ENCODE measurements at regions of chr6 and their contacts with region 1.

Region 1: GRCh38 chr6:137707590-137708360 is 159.3 kb upstream of the TNFAIP3 start:
- DNase-seq: peak; percentile 60 to 98 (median 82)
- ATAC-seq: peak; percentile 71
- H3K4me3 ChIP-seq: no peak overlapping the region
- H3K4me3 Mint-ChIP-seq: peak overlapping the region; percentile 3
- H3K27ac ChIP-seq: peak overlapping the region; percentile 46 to 82
- H3K27ac Mint-ChIP-seq: peak overlapping the region; percentile 88
- H3K4me1 ChIP-seq: peaks cover 37% of the 10 kb centered on the region
- H3K4me1 Mint-ChIP-seq: peaks cover 54% of the 10 kb centered on the region
- H3K27me3 ChIP-seq: no peaks in the 10 kb centered on the region
- H3K27me3 Mint-ChIP-seq: no peaks in the 10 kb centered on the region
- CTCF ChIP-seq: peak; percentile 81

Region 2: GRCh38 chr6:137423444-137424168 is 284.2 kb before region 1 on chr6:
- CTCF ChIA-PET with region 1: no interaction called
- POLR2A ChIA-PET with region 1: no interaction called
- intact Hi-C with region 1: no loop called
- DNase-seq: no peak
- ATAC-seq: no peak
- H3K4me3 ChIP-seq: no peak overlapping the region
- H3K4me3 Mint-ChIP-seq: no peak overlapping the region
- H3K27ac ChIP-seq: no peak overlapping the region
- H3K27ac Mint-ChIP-seq: no peak overlapping the region
- H3K4me1 ChIP-seq: peaks cover 12% of the 10 kb centered on the region
- H3K4me1 Mint-ChIP-seq: peaks cover 23% of the 10 kb centered on the region
- H3K27me3 ChIP-seq: no peaks in the 10 kb centered on the region
- H3K27me3 Mint-ChIP-seq: no peaks in the 10 kb centered on the region
- CTCF ChIP-seq: no peak

Region 3: DNA sequence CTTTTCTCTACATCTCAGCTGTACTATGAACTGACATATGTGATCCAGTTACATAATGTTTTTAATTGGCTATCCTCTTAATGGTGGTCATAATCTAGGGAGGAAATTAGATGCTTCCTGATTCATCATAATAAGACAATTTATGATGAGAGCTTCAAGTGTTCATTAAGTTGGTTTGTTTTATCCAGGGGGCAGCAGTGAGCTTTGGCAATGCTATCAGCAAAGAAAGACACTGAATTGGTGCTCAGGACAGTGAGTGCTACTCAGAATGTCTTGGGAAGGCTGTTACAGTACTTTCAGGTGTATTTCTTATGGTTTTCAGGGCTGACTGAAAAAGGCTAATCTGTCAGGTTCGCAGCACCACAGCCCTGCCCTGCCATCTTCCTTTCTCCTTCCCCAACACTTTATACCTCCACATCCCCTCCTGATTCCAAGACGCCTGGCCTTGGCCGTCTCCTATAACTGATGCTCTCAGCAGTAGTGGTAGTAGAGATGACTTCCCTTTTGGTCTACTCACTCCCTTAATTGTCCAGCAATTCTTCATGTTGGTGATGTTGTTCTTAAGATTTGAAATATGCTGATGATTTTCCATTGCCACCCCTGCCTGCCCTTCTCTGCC is 92.3 kb after region 1 on chr6:
- CTCF ChIA-PET with region 1: interaction called, 33 read pairs
- POLR2A ChIA-PET with region 1: interaction called, 13 read pairs
- intact Hi-C with region 1: loop called (anchors 1 kb)
- DNase-seq: peak; percentile 40 to 93 (median 72)
- ATAC-seq: peak; percentile 83
- H3K4me3 ChIP-seq: no peak overlapping the region
- H3K4me3 Mint-ChIP-seq: no peak overlapping the region
- H3K27ac ChIP-seq: peak overlapping the region in 1 of 2 experiments; percentile 4
- H3K27ac Mint-ChIP-seq: peak overlapping the region; percentile 56
- H3K4me1 ChIP-seq: peaks cover 47% of the 10 kb centered on the region
- H3K4me1 Mint-ChIP-seq: peaks cover 53% of the 10 kb centered on the region
- H3K27me3 ChIP-seq: no peaks in the 10 kb centered on the region
- H3K27me3 Mint-ChIP-seq: no peaks in the 10 kb centered on the region
- CTCF ChIP-seq: peak; percentile 68

Region 4: DNA sequence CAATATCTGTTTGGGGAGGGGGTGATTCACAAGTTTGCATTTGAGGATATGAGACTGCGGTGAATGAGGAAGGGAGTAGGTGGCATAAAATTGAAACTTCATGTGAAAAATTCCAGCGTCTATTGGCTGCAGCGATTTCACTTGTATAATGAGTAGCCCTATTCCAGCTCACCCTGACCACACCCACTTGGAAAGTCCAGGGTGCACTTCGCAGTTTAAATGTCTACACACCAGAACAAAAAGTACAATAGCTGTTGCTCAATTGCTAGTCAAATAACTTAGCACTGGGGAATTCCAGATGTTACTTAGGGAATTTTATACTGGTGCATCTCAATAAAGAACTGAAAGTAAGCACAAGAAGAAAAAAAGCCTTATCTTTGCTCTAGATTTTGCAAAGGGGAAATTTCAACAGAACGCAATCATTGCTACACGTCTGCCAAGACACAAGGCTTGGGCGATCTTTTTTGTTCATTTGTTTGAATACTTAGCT is 165.5 kb after region 1 on chr6:
- CTCF ChIA-PET with region 1: interaction called, 28 read pairs
- POLR2A ChIA-PET with region 1: interaction called, 44 read pairs
- intact Hi-C with region 1: no loop called
- DNase-seq: peak in 5 of 9 experiments; percentile 39 to 90 (median 54)
- ATAC-seq: peak; percentile 7
- H3K4me3 ChIP-seq: no peak overlapping the region
- H3K4me3 Mint-ChIP-seq: peak overlapping the region; percentile 98
- H3K27ac ChIP-seq: peak overlapping the region in 1 of 2 experiments; percentile 24
- H3K27ac Mint-ChIP-seq: peak overlapping the region; percentile 29
- H3K4me1 ChIP-seq: peaks cover 53% of the 10 kb centered on the region
- H3K4me1 Mint-ChIP-seq: peaks cover 71% of the 10 kb centered on the region
- H3K27me3 ChIP-seq: no peaks in the 10 kb centered on the region
- H3K27me3 Mint-ChIP-seq: no peaks in the 10 kb centered on the region
- CTCF ChIP-seq: no peak

Region 5: GRCh38 chr6:137938770-137939379 is 231.1 kb after region 1 on chr6:
- CTCF ChIA-PET with region 1: interaction called, 21 read pairs
- POLR2A ChIA-PET with region 1: interaction called, 4 read pairs
- intact Hi-C with region 1: loop called in 1 of 2 experiments (anchors 1 kb)
- DNase-seq: no peak
- ATAC-seq: no peak
- H3K4me3 ChIP-seq: no peak overlapping the region
- H3K4me3 Mint-ChIP-seq: no peak overlapping the region
- H3K27ac ChIP-seq: no peak overlapping the region
- H3K27ac Mint-ChIP-seq: no peak overlapping the region
- H3K4me1 ChIP-seq: peaks cover 7% of the 10 kb centered on the region
- H3K4me1 Mint-ChIP-seq: peaks cover 9% of the 10 kb centered on the region
- H3K27me3 ChIP-seq: no peaks in the 10 kb centered on the region
- H3K27me3 Mint-ChIP-seq: no peaks in the 10 kb centered on the region
- CTCF ChIP-seq: no peak

Region 6: DNA sequence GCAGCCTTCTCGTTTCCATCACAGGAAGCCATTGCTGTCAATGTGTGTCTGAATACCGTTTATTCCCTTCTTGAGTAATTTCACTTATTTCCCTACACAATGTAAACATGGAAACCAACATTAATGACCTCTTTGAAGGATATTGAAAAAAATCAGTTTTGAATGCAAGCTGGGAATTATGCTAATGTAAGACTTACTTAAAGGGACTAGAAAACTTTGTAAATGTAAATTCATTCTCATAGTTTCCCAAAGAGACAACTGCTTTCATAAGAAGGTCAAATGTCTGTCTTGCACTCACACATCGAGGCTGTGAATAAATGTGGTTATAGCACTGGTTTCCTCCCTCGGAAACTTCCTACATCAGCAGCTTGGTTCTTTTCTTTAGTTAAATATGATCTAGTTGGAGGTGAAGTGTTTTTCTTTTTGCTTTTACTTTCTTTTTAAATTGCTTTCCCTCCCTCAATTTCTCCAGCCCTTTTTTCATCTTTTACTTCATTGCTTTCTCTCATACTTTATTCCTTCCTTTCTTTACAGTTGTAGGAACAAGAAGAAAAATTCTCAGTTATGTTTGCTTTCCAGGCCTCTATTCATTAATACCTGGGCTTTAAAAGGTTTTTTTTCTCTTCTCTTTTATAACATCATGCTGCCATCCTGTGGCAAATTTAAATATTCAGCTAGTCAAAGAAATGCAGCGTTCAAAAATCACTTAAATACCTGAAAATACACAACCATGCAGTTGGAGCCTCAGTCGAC is 267.6 kb after region 1 on chr6:
- CTCF ChIA-PET with region 1: interaction called, 20 read pairs
- POLR2A ChIA-PET with region 1: interaction called, 8 read pairs
- intact Hi-C with region 1: loop called (anchors 1 kb)
- DNase-seq: peak in 5 of 9 experiments; percentile 19 to 89 (median 38)
- ATAC-seq: peak; percentile 80
- H3K4me3 ChIP-seq: peak overlapping the region; percentile 18 to 21
- H3K4me3 Mint-ChIP-seq: peak overlapping the region; percentile 74
- H3K27ac ChIP-seq: peak overlapping the region; percentile 39 to 85
- H3K27ac Mint-ChIP-seq: peak overlapping the region; percentile 92
- H3K4me1 ChIP-seq: peaks cover 24% of the 10 kb centered on the region
- H3K4me1 Mint-ChIP-seq: peaks cover 40% of the 10 kb centered on the region
- H3K27me3 ChIP-seq: no peaks in the 10 kb centered on the region
- H3K27me3 Mint-ChIP-seq: no peaks in the 10 kb centered on the region
- CTCF ChIP-seq: peak; percentile 75

Region 7: DNA sequence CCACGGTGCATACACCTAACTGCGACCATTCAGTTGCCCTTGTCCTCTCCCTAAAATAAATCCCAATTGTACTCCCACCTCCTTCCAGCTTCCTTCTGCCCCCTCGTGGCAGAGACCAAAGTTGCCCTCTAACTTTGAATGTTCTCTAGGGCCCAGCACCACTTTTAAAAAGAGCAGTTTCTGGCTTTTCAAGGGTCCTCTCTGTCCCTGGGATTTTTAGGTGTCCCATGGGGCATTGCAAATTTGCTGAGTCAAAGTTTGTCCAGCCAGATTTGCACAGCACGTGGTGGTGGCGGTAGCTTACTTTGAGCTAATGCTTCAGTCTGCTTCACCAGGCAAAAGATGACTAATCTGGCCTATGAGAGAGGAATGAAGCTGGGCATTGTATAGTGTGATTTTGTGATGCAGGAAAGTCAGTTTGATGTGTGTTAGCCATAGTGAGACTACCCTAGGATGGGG is 299.3 kb after region 1 on chr6:
- CTCF ChIA-PET with region 1: interaction called, 30 read pairs
- POLR2A ChIA-PET with region 1: no interaction called
- intact Hi-C with region 1: loop called (anchors 1 to 2 kb)
- DNase-seq: peak in 5 of 9 experiments; percentile 20 to 51 (median 30)
- ATAC-seq: no peak
- H3K4me3 ChIP-seq: no peak overlapping the region
- H3K4me3 Mint-ChIP-seq: no peak overlapping the region
- H3K27ac ChIP-seq: no peak overlapping the region
- H3K27ac Mint-ChIP-seq: no peak overlapping the region
- H3K4me1 ChIP-seq: no peaks in the 10 kb centered on the region
- H3K4me1 Mint-ChIP-seq: peaks cover 4% of the 10 kb centered on the region
- H3K27me3 ChIP-seq: no peaks in the 10 kb centered on the region
- H3K27me3 Mint-ChIP-seq: no peaks in the 10 kb centered on the region
- CTCF ChIP-seq: peak; percentile 38

Region 8: DNA sequence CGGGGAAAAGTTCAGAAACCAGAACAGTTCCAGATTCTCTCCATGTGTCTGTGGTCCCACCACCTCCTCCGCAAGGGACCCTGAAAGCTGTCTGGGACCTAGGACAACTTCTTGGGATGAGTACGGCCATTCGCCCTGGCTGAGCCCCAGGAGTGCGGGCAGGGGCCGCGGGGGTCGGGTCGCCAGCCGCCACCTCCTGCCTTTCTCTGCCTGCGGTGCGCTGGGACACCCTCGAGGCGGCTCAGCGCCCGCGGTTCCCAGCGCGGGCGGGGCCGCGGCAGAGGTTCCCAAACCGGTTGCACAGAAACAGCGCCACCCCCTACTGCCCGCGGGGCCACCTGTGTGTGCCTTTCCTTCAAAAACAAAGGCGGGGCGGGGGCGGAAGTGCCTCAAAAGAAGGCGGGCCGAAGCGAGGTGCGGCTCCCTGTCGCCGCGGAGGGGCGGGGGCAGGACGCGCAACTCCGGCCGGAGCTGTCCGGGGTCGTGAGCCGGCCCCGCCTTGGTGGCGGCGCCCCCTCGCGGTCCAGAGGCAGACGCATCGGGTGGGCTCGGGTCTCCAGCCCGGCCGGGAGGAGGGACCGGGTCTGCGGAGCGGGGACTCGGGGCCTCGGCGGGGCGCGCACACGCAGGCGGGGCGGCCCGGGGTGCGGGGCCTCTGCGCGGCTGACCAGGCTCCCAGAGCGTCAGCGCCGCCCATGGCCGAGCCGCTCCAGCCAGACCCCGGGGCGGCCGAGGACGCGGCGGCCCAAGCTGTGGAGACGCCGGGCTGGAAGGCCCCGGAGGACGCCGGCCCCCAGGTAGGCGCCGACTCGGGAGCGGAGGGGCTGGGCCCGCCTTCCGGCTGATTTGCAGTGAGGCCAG is 696.3 kb after region 1 on chr6 and contains the start of gene HEBP2:
- CTCF ChIA-PET with region 1: no interaction called
- POLR2A ChIA-PET with region 1: no interaction called
- intact Hi-C with region 1: loop called in 1 of 2 experiments (anchors 10 kb)
- DNase-seq: peak; percentile 85 to 96 (median 93)
- ATAC-seq: peak; percentile 91
- H3K4me3 ChIP-seq: peak within 1 kb of the TSS; percentile 63 to 85
- H3K4me3 Mint-ChIP-seq: peak within 1 kb of the TSS; percentile 90
- H3K27ac ChIP-seq: peak within 1 kb of the TSS; percentile 63 to 85
- H3K27ac Mint-ChIP-seq: peak within 1 kb of the TSS; percentile 97
- H3K4me1 ChIP-seq: peaks cover 15% of the 10 kb centered on the region
- H3K4me1 Mint-ChIP-seq: peaks cover 23% of the 10 kb centered on the region
- H3K27me3 ChIP-seq: no peaks in the 10 kb centered on the region
- H3K27me3 Mint-ChIP-seq: no peaks in the 10 kb centered on the region
- CTCF ChIP-seq: peak; percentile 23
- total RNA-seq, gene HEBP2: 64.6 to 69.1 TPM